ENCODE measurements at regions of chr14 and their contacts with region 1.

Region 1: GRCh38 chr14:32076278-32077080 is 625 bp upstream of the ARHGAP5 start:
- DNase-seq: peak; percentile 98
- ATAC-seq: peak; percentile 91 to 96 (median 93)
- H3K4me3 ChIP-seq: peak overlapping the region; percentile 90
- H3K27ac ChIP-seq: peak overlapping the region; percentile 95
- H3K4me1 ChIP-seq: peaks cover 31% of the 10 kb centered on the region
- H3K27me3 ChIP-seq: no peaks in the 10 kb centered on the region
- CTCF ChIP-seq: no peak

Region 2: DNA sequence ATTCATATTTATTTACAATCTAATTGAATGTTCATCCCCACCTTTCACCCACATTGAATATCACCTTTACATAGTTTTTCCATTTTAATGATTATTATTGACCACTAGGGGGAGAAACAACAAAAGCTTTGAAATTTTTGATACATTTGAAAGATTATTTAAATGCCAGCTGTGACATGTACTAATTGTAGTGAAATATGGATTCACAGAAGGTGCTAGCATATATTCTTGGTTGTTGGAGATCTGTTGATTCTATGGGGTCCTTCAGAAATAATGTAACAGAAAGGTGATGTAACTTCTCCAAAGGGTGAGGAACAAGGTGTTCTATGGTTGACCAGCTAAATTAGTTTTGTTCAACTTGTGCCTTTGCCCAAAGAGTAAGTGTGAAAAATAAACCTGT is 566.3 kb before region 1 on chr14:
- intact Hi-C with region 1: loop called in 1 of 2 experiments (anchors 10 kb)
- DNase-seq: no peak
- ATAC-seq: no peak
- H3K4me3 ChIP-seq: no peak overlapping the region
- H3K27ac ChIP-seq: no peak overlapping the region
- H3K4me1 ChIP-seq: no peaks in the 10 kb centered on the region
- H3K27me3 ChIP-seq: no peaks in the 10 kb centered on the region
- CTCF ChIP-seq: peak; percentile 70

Region 3: GRCh38 chr14:31926123-31926522 is 150.4 kb before region 1 on chr14:
- intact Hi-C with region 1: loop called (anchors 1 to 10 kb)
- DNase-seq: no peak
- ATAC-seq: peak; percentile 32 to 61 (median 49)
- H3K4me3 ChIP-seq: no peak overlapping the region
- H3K27ac ChIP-seq: peak overlapping the region; percentile 80
- H3K4me1 ChIP-seq: peaks cover 19% of the 10 kb centered on the region
- H3K27me3 ChIP-seq: no peaks in the 10 kb centered on the region
- CTCF ChIP-seq: peak; percentile 50

Region 4: GRCh38 chr14:31937721-31938346 is 138.6 kb before region 1 on chr14:
- intact Hi-C with region 1: loop called in 1 of 2 experiments (anchors 10 kb)
- DNase-seq: peak; percentile 60 to 61
- ATAC-seq: peak; percentile 92 to 96 (median 94)
- H3K4me3 ChIP-seq: no peak overlapping the region
- H3K27ac ChIP-seq: no peak overlapping the region
- H3K4me1 ChIP-seq: peaks cover 14% of the 10 kb centered on the region
- H3K27me3 ChIP-seq: no peaks in the 10 kb centered on the region
- CTCF ChIP-seq: no peak

Region 5: DNA sequence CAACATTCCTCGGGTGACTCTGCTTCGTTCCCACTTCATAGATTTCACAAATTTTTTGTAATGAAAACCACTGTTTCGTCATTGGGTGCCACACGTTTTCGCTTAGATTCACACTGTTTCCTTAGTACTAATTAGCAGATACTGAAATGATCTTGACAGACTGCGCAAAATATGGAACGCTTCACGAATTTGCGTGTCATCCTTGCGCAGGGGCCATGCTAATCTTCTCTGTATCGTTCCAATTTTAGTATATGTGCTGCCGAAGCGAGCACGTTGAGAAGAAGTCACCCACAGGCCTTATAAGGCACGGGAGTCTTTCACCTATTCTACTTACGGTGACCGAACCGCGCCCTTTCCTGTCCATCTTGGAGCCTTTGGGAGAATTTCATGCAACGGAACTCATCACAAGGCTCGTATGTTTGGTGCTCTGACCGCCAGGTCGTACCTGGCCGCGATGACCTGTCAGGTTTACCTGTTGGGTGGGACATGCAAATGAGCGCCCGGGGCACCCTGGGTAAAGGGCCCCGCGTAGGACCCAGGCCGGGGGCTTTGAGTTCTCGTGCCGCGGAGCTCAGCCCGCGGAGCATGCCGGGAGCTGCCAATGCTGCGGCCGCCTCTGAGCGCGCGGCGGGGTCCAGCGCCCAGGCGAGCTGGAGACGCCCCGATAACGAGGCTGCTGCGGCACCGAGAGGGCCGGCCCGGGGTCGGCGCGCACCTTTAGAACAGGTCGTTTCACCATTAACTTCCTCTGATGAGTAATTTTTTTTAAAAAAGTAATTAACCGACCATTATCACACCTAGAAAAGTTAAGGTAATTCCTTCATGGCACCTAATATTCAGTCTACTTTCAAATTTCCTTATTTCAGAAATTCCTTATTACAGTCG is 126.8 kb after region 1 on chr14 and contains the start of gene RNU6-8:
- intact Hi-C with region 1: loop called (anchors 1 to 2 kb)
- DNase-seq: peak; percentile 85 to 95
- ATAC-seq: peak; percentile 89 to 93 (median 92)
- H3K4me3 ChIP-seq: peak within 1 kb of the TSS; percentile 84
- H3K27ac ChIP-seq: peak within 1 kb of the TSS; percentile 89
- H3K4me1 ChIP-seq: peaks cover 5% of the 10 kb centered on the region
- H3K27me3 ChIP-seq: no peaks in the 10 kb centered on the region
- CTCF ChIP-seq: no peak
- total RNA-seq, gene RNU6-8: not detected

Region 6: DNA sequence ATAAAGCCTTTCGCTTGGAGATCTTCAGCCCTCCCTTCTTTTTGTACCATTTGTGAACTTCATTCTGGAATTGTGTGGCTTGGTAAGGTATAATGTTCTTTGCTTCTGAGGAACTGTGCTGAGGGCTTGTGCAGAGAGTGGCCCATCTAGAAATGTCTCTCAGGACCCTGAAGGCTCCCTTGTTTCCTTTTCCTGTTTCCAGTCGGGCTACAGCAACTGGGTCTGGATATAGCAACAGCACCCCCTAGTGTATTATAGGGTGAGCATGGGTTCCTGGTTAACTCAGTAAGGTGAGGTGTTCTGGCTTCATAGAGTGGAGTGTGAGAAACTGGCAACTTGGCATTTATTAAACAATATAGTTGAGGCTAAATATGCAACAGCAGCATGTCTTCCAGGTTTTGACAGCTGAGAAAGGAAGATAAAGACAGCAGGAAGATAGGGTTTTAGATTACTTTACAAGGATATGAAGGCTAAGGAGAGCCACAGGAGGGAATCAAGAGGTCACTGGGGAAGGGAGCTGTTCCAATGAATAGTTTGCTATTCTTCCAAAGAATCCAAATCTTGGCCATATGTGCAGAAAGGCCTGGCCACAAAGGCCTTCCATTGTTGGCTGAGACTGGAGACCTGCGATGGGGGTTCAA is 175.7 kb after region 1 on chr14:
- intact Hi-C with region 1: loop called (anchors 1 to 2 kb)
- DNase-seq: no peak
- ATAC-seq: peak; percentile 84 to 93 (median 90)
- H3K4me3 ChIP-seq: no peak overlapping the region
- H3K27ac ChIP-seq: peak overlapping the region; percentile 24
- H3K4me1 ChIP-seq: peaks cover 5% of the 10 kb centered on the region
- H3K27me3 ChIP-seq: no peaks in the 10 kb centered on the region
- CTCF ChIP-seq: peak; percentile 80

Region 7: GRCh38 chr14:32329146-32329545 is 252.7 kb after region 1 on chr14 and contains the start of gene AKAP6:
- intact Hi-C with region 1: no loop called
- DNase-seq: no peak
- ATAC-seq: no peak
- H3K4me3 ChIP-seq: no peak within 1 kb of the TSS
- H3K27ac ChIP-seq: no peak within 1 kb of the TSS
- H3K4me1 ChIP-seq: peaks cover 12% of the 10 kb centered on the region
- H3K27me3 ChIP-seq: no peaks in the 10 kb centered on the region
- CTCF ChIP-seq: no peak
- total RNA-seq, gene AKAP6: 113 to 173 (median 152) TPM

Region 8: DNA sequence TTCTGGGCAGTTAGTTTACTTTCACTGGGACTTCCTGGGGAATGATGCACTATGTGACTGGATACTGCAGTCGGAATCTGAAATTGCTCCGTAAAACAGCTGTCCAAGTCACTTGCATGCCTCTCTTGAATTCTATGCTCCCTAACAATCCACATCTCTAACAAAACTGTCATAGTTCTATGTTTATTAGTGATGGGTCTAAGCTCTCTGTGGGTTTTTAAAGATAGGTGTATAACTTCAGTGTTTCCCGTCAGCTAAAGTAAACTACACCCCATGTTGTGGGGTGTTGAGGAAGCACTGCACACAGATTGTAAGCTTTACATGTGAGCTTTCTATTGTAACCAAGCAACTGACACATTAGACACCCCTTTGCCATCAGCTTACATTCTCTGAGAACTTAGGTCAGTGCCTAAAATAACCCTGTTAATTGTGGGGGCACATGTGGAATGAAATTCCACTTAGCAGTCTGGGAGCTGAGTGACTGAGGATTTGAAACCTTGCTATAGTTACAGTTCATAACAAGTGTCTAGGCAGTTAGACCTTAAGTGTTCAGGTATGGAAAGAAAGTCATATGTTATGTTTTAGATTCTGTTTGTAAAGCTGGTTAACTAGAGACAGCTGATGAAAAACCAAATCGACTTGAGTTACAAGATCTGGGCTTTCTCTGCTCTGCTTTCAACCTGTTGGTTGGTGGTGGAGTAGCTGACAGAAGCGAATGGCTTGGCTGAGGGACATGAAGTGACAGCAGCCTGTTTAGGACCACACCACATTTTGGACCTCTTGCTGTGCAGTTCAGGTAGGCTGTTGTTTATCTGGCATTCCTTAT is 418.3 kb after region 1 on chr14:
- intact Hi-C with region 1: no loop called
- DNase-seq: peak; percentile 20 to 59
- ATAC-seq: peak; percentile 86 to 89 (median 87)
- H3K4me3 ChIP-seq: peak overlapping the region; percentile 73
- H3K27ac ChIP-seq: peak overlapping the region; percentile 95
- H3K4me1 ChIP-seq: peaks cover 39% of the 10 kb centered on the region
- H3K27me3 ChIP-seq: no peaks in the 10 kb centered on the region
- CTCF ChIP-seq: no peak

Region 9: DNA sequence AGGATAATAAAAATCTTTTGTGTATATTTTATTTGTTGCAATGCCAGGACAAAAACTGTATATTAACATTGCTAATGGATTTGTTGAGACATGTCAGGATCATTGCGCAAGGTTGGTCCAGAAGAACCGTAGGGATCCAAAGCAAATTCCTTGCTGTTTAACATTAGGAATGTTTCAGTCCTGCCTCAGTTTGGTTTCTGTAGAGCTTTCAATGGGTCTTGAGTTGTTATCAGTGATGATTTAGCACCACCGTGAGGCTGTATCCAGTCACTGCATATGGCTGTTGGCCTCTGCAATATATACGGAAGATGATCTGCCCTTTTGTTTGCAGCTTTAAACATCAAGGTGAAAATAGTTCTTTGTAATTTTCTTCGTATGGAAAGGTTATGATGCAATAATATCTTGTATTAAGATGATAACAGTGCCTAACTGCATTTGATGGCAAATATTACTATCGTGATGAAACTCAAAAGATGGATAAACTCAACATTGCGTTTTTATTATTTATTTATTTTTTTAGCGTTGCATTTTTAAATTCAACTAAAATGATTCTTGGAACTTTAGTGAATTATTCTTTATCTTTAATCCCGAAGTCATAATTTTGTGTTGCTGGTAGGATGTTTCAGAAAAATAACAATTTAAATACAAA is 483.9 kb after region 1 on chr14:
- intact Hi-C with region 1: loop called (anchors 10 kb)
- DNase-seq: peak in 1 of 2 donors; percentile 18
- ATAC-seq: peak; percentile 68 to 87 (median 82)
- H3K4me3 ChIP-seq: no peak overlapping the region
- H3K27ac ChIP-seq: peak overlapping the region; percentile 24
- H3K4me1 ChIP-seq: peaks cover 50% of the 10 kb centered on the region
- H3K27me3 ChIP-seq: no peaks in the 10 kb centered on the region
- CTCF ChIP-seq: peak; percentile 80

Measured in psoas muscle (tissue), 8 donors.